Endothelial cell of umbilical vein (primary cell): ENCODE measurements at regions of chr7 and their contacts with region 1.

Region 1: DNA sequence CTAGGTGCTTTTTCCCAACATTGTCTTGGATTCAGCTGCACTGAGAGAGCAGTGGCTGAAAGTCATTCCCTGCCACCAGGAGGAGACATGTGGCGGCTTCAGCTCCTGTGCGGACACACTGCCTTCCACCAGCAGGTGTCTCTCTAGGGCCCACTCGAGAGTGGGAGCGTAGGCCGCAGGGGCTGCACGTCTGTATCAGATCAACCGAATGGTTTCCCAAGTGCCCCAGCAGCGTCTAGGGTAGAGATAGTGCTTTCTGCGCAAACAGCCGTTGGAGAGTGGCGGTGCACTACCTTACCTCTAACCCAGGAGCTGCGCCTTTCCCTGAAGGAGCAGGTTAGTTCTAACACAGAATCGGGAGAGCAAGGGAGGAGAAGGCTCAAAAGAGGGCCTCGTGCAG is 31.7 kb downstream of the PAPOLB start:
- DNase-seq: peak; percentile 80
- H3K4me3 ChIP-seq: no peak overlapping the region
- H3K27ac ChIP-seq: no peak overlapping the region
- H3K4me1 ChIP-seq: no peaks in the 10 kb centered on the region
- H3K27me3 ChIP-seq: no peaks in the 10 kb centered on the region
- CTCF ChIP-seq: peak; percentile 98 to 100
- POLR2A ChIP-seq: no peak

Region 2: GRCh38 chr7:4797858-4798705 is 32.1 kb before region 1 on chr7:
- CTCF ChIA-PET with region 1: interaction called, 11 read pairs
- POLR2A ChIA-PET with region 1: no interaction called
- dilution Hi-C with region 1: no loop called
- intact Hi-C with region 1: no loop called
- DNase-seq: peak; percentile 30
- H3K4me3 ChIP-seq: no peak overlapping the region
- H3K27ac ChIP-seq: no peak overlapping the region
- H3K4me1 ChIP-seq: no peaks in the 10 kb centered on the region
- H3K27me3 ChIP-seq: no peaks in the 10 kb centered on the region
- CTCF ChIP-seq: peak; percentile 67 to 97
- POLR2A ChIP-seq: no peak

Region 3: DNA sequence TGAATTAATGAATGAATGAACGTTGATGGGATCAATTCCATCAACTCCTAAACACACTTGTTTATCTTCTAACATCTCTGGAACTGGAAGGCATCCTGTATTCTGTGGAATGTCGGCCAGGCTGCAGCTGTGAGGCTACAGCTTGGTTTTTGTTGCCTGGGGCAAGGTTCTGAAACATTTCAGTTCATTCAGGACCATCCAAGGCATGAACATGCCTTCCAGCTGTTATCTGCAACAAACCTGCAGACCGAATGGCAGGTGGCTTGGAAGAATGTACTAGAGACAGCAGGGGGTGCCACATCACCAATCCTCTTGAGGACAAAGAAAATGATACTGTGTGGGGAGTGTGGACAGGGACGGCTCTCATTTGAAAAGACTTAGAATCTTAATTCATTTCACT is 19.2 kb after region 1 on chr7:
- CTCF ChIA-PET with region 1: interaction called, 10 read pairs
- POLR2A ChIA-PET with region 1: no interaction called
- dilution Hi-C with region 1: no loop called
- intact Hi-C with region 1: no loop called
- DNase-seq: peak; percentile 36
- H3K4me3 ChIP-seq: no peak overlapping the region
- H3K27ac ChIP-seq: no peak overlapping the region
- H3K4me1 ChIP-seq: peaks cover 2% of the 10 kb centered on the region
- H3K27me3 ChIP-seq: peaks cover 0 to 3% of the 10 kb centered on the region in 2 experiments
- CTCF ChIP-seq: peak; percentile 23 to 39
- POLR2A ChIP-seq: no peak

Region 4: DNA sequence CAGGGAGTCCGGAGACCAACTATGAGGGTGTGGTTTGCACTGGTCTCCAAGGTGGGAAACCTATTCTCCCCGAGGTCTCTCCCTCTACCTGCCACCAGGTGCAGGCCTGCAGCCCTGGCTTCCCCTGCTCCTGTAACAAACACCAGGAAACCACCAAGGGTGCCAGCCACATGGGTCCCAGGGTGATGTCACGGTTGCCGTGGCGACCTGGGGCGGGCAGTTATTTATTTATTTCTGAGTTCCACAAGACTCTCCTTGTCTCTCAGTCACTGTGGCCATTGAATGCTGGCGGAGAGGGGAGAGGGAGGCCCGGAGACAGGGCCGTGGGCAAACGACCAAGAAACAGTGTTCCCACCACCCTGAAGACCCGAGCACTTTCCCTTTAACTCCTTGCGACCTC is 101.8 kb after region 1 on chr7:
- CTCF ChIA-PET with region 1: no interaction called
- POLR2A ChIA-PET with region 1: no interaction called
- dilution Hi-C with region 1: no loop called
- intact Hi-C with region 1: no loop called
- DNase-seq: no peak
- H3K4me3 ChIP-seq: no peak overlapping the region
- H3K27ac ChIP-seq: no peak overlapping the region
- H3K4me1 ChIP-seq: no peaks in the 10 kb centered on the region
- H3K27me3 ChIP-seq: no peaks in the 10 kb centered on the region
- CTCF ChIP-seq: no peak
- POLR2A ChIP-seq: no peak

Region 5: DNA sequence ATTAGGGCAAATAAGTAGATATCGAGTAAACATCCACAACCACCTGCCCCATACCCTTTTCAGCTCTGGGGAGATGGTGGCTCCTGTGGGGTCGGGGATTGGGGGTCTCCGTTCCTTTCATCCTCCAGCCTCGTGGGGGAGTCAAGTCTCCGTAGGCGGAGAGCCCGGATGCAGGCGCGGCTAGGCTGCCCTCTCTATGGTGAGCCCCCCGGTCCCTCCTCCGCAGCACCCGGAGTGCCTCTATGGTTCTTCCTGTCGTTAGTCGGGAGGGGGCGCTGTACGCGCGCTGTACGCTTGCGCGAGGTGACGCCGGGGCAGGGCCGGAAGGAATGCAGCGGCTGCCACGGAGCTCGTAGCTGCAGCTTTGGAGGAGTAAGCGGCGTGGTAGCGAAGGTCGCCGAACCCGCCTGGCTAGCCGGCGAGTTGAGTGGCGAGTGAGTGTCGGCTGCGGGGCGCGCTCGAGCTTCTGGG is 143.6 kb after region 1 on chr7:
- CTCF ChIA-PET with region 1: interaction called, 14 read pairs
- POLR2A ChIA-PET with region 1: no interaction called
- dilution Hi-C with region 1: no loop called
- intact Hi-C with region 1: no loop called
- DNase-seq: peak; percentile 90
- H3K4me3 ChIP-seq: peak overlapping the region; percentile 47 to 58 (median 57)
- H3K27ac ChIP-seq: no peak overlapping the region
- H3K4me1 ChIP-seq: peaks cover 7% of the 10 kb centered on the region
- H3K27me3 ChIP-seq: no peaks in the 10 kb centered on the region
- CTCF ChIP-seq: peak; percentile 87 to 93
- POLR2A ChIP-seq: peak; percentile 73

Region 6: DNA sequence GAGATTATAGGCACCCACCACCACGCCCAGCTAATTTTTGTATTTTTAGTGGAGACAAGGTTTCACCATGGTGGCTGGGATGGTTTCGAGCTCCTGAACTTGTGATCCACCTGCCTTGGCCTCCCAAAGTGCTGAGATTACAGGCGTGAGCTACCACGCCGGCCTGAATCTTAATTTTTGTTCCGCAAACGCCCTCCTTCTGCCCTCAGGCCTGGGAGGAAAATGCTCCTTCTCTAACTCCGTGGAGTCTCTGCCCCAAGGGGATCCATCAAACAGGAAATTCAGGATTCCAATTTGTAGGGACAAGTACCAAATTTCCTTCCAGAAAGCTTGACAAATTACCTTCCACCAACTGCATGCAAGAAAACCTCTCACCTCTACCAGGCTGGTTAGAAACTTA is 258.7 kb after region 1 on chr7:
- CTCF ChIA-PET with region 1: interaction called, 121 read pairs
- POLR2A ChIA-PET with region 1: no interaction called
- dilution Hi-C with region 1: no loop called
- intact Hi-C with region 1: loop called (anchors 1 kb)
- DNase-seq: no peak
- H3K4me3 ChIP-seq: no peak overlapping the region
- H3K27ac ChIP-seq: no peak overlapping the region
- H3K4me1 ChIP-seq: no peaks in the 10 kb centered on the region
- H3K27me3 ChIP-seq: no peaks in the 10 kb centered on the region
- CTCF ChIP-seq: no peak
- POLR2A ChIP-seq: no peak